SK-N-SH (cell line): ENCODE measurements at regions of chr3 and their contacts with region 1.

Region 1: GRCh38 chr3:98994128-98994762 is 92.8 kb upstream of the DCBLD2 start:
- DNase-seq: peak; percentile 24
- H3K4me3 ChIP-seq: no peak overlapping the region
- H3K27ac ChIP-seq: peak overlapping the region in 1 of 2 experiments; percentile 5; a peak in 1 of 4 replicates
- H3K4me1 ChIP-seq: no peaks in the 10 kb centered on the region; a peak in 1 of 4 replicates
- H3K27me3 ChIP-seq: no peaks in the 10 kb centered on the region
- CTCF ChIP-seq: peak; percentile 85
- EP300 ChIP-seq: no peak
- RAD21 ChIP-seq: peak; percentile 96

Region 2: GRCh38 chr3:98807008-98807407 is 187.2 kb before region 1 on chr3:
- CTCF ChIA-PET with region 1: interaction called, 11 read pairs
- POLR2A ChIA-PET with region 1: no interaction called
- DNase-seq: no peak
- H3K4me3 ChIP-seq: no peak overlapping the region
- H3K27ac ChIP-seq: peak overlapping the region in 1 of 2 experiments; percentile 39; a peak in 2 of 4 replicates
- H3K4me1 ChIP-seq: peaks cover 0 to 5% of the 10 kb centered on the region in 2 experiments; a peak in 2 of 4 replicates
- H3K27me3 ChIP-seq: no peaks in the 10 kb centered on the region
- CTCF ChIP-seq: no peak
- EP300 ChIP-seq: no peak
- RAD21 ChIP-seq: no peak

Region 3: DNA sequence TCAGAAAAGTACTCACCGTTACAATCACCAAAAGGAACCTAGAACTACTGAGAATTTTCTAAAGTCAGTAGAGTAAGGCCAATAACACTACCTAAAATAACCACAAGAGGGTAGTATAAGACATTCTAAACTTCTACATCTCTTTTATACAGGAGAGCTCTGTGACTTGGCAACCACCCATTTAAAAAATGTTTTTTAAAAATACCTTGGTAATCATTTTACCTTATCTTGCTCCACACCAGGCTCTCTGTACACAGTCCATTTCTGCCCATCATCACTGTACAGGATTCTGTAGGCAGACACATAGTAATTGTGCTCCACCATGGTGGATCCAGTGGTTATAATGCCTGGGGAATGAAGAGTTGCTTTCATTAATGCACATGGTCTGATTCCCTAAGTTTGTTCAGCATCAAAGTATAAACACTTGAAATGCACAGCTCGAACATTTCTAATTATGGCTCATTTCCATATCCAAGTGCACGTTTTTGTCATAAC is 176.7 kb before region 1 on chr3:
- CTCF ChIA-PET with region 1: interaction called, 232 read pairs
- POLR2A ChIA-PET with region 1: interaction called, 4 read pairs
- DNase-seq: peak; percentile 39
- H3K4me3 ChIP-seq: no peak overlapping the region
- H3K27ac ChIP-seq: peak overlapping the region; percentile 40 to 59
- H3K4me1 ChIP-seq: peaks cover 10 to 22% of the 10 kb centered on the region in 2 experiments
- H3K27me3 ChIP-seq: no peaks in the 10 kb centered on the region
- CTCF ChIP-seq: peak; percentile 69
- EP300 ChIP-seq: no peak
- RAD21 ChIP-seq: peak; percentile 81

Region 4: DNA sequence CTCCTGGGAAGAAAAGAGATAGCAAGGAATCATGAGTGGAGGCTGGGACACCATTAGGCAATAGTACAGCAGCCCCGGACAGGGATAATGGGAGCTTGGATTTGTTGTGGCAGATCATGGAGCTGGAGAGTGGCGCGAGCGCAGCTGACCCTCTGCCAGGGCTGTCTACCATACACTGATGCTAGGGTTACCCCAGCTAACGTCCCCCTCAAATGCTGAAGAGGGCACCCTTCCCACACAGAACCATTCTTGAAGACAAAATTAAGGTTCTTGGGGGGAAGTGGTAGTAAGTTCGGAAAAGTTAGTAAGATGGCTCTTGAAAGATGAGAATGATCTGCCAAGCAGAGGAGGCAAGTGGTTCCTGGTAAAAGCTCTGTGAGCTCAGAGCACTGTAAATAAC is 170.0 kb before region 1 on chr3:
- CTCF ChIA-PET with region 1: interaction called, 42 read pairs
- POLR2A ChIA-PET with region 1: no interaction called
- DNase-seq: no peak
- H3K4me3 ChIP-seq: no peak overlapping the region
- H3K27ac ChIP-seq: peak overlapping the region in 1 of 2 experiments; percentile 47; a peak in 2 of 4 replicates
- H3K4me1 ChIP-seq: peaks cover 15 to 17% of the 10 kb centered on the region in 2 experiments; a peak in 3 of 4 replicates
- H3K27me3 ChIP-seq: no peaks in the 10 kb centered on the region
- CTCF ChIP-seq: peak; percentile 24; the same call in 1 of the 2 replicates
- EP300 ChIP-seq: no peak
- RAD21 ChIP-seq: peak; percentile 37

Region 5: DNA sequence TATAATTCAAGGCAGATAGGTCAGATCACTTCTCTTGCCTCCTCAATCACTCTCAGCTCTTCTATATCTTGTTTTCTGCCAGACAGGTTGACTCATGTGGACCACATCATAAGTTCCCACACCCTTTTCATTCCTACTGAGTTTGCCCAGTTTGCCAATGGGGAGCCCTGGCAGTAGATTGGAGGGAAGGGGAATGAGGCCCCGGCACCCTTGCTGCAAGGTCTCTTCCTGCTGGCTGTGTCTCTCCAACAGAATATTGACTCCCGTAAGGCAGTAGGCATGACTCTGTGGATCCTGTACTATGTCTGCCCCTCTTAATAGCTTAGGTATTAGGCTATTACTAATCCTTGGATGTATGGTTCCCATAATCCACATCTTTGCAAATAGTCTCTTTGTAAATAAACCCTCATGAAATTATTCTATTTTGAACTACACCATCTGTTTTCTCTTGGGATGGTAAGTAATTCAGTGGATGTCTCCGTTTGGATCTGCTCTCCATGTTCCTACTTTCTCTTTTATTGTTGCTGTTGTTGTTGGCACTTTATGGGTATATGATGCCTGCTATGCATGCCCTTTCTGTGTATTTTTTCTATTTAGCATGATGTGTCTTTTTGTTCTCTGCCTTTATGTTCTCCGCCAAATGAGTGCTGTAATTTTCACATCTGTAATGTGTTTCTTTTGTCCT is 27.2 kb before region 1 on chr3:
- CTCF ChIA-PET with region 1: interaction called, 14 read pairs
- POLR2A ChIA-PET with region 1: no interaction called
- DNase-seq: no peak
- H3K4me3 ChIP-seq: peak overlapping the region; percentile 16 to 24; a peak in 2 of 4 replicates
- H3K27ac ChIP-seq: peak overlapping the region; percentile 94 to 100
- H3K4me1 ChIP-seq: peaks cover 34 to 63% of the 10 kb centered on the region in 2 experiments
- H3K27me3 ChIP-seq: no peaks in the 10 kb centered on the region
- CTCF ChIP-seq: no peak
- EP300 ChIP-seq: no peak
- RAD21 ChIP-seq: no peak

Region 6: GRCh38 chr3:99114565-99115291 is 120.5 kb after region 1 on chr3:
- CTCF ChIA-PET with region 1: no interaction called
- POLR2A ChIA-PET with region 1: no interaction called
- DNase-seq: peak; percentile 0
- H3K4me3 ChIP-seq: no peak overlapping the region
- H3K27ac ChIP-seq: no peak overlapping the region
- H3K4me1 ChIP-seq: no peaks in the 10 kb centered on the region
- H3K27me3 ChIP-seq: no peaks in the 10 kb centered on the region
- CTCF ChIP-seq: peak; percentile 58
- EP300 ChIP-seq: no peak
- RAD21 ChIP-seq: peak; percentile 68